ENCODE measurements at regions of chr2 and their contacts with region 1.

Region 1: GRCh38 chr2:16817305-16818179 is 151.9 kb upstream of the CYRIA start:
- DNase-seq: no peak
- H3K27ac ChIP-seq: no peak overlapping the region
- CTCF ChIP-seq: no peak

Region 2: GRCh38 chr2:16026811-16027501 is 790.6 kb before region 1 on chr2:
- CTCF ChIA-PET with region 1: interaction called, 10 read pairs
- POLR2A ChIA-PET with region 1: no interaction called
- DNase-seq: no peak
- H3K27ac ChIP-seq: no peak overlapping the region
- CTCF ChIP-seq: no peak

Region 3: GRCh38 chr2:16773080-16773713 is 44.3 kb before region 1 on chr2:
- CTCF ChIA-PET with region 1: no interaction called
- POLR2A ChIA-PET with region 1: no interaction called
- DNase-seq: peak; percentile 62
- H3K27ac ChIP-seq: no peak overlapping the region
- CTCF ChIP-seq: peak; percentile 52

Region 4: DNA sequence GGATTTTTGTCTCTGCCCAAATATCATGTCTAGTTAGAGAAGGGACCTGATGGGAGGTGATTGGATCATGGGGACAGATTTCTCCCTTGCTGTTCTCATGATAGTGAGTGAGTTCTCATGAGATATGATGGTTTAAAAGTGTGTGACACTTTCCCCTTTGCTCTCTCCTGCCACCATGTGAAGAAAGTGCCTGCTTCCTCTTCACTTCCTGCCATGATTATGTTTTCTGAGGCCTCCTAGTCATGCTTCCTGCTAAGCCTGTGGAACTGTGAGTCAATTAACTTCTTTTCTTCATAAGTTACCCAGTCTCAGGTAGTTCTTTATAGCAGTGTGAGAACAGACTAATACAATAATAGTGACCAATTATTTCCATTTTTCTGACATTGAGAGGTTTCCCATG is 15.4 kb after region 1 on chr2:
- CTCF ChIA-PET with region 1: no interaction called
- POLR2A ChIA-PET with region 1: no interaction called
- DNase-seq: no peak
- H3K27ac ChIP-seq: no peak overlapping the region
- CTCF ChIP-seq: no peak